Posterior vena cava (tissue), 2 donors: ENCODE measurements at regions of chr12 and their contacts with region 1.

Region 1: GRCh38 chr12:130683080-130683479 is 33.0 kb downstream of the RIMBP2 start:
- DNase-seq: no peak

Region 2: DNA sequence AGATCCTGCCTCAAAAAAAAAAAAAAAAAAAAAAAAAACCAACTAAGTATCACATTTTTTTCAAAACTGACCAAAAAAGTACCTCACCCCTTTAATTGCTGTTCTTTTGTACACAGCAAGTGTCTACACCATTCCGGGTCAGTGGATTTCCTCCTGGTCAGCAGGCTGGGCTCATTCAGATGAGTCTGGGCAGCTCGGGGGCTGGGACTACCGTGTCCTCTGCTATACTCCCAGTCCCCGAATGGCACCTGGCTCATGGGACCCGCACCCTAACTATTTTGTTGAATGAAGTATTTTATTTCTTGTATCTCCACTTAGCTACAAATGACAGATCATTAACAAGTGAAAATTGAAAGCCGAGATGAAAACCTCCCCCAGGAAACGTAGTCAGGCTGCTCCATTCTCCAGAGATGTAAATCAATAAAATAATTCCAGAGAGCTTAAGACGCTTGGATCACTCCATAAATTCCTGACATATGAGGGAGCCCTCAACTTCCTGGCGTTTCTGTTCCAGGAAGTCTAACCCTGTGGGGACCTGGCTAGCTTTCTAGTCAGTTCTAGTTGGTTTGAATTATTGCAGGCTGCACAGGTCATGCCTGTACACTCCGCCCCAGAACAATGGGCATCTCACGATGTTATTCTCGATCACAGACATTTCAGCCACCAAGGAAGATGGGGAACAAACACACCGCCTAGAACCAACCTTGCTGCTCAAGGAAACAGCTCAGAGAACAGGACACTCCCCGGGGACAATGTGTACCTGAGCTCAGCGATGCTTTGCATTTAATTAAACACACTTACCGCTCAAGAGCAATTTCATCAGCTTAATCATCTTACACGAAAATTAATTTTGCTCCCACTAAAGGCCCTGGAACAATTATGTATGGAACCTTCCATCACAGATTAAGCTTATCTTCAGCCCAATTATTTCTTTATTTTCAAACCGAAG is 43.3 kb before region 1 on chr12:
- intact Hi-C with region 1: loop called in 1 of 2 experiments (anchors 1 kb)
- DNase-seq: no peak

Region 3: GRCh38 chr12:132582058-132582420 is 1899.0 kb after region 1 on chr12:
- intact Hi-C with region 1: no loop called
- DNase-seq: peak; percentile 89